MCF 10A (cell line): ENCODE measurements at regions of chr10 and their contacts with region 1.

Region 1: GRCh38 chr10:32207544-32207943 is 139.4 kb downstream of the EPC1 start:
- DNase-seq: peak; percentile 64
- H3K4me3 Mint-ChIP-seq: no peak overlapping the region
- H3K27ac Mint-ChIP-seq: no peak overlapping the region
- H3K4me1 Mint-ChIP-seq: peaks cover 6% of the 10 kb centered on the region
- H3K27me3 Mint-ChIP-seq: no peaks in the 10 kb centered on the region
- CTCF ChIP-seq: peak; percentile 56

Region 2: DNA sequence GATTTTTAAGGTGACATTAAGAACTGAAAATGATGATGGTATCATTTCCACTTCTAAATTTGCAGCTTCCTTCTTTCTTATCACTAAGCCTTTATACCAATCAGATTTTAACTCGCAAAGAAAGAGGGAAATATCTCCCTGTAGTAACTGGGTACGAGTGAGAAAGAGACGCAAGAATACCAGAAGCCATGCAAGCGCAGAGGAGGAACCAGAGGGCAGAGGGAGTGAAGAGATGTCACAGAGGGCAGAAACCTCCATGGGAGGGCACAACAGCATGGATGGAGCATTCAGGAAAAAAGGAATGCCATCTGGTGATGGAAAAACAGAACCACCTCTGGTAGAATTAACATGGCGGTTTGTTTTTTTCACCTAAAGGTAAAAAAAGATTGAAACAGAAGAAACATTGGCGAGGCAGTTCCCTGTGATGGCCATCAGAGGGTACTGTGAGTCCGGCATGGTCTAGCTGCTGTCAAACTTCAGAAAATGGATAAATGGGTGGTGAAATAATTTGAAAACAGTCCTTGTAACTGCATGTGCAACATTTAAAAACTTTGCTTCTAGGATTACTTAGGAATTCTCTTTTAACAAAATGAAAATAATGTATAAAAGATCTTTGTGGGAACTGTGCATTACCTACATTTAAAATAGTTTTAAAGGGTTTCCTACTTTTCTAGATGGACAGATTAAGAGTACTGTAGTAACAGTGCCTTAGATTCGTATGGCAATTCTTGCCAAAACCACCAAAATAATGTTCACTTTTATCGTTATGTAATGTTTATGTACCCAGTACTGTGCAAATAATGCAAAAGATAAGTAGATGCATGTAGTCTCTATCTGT is 370.8 kb before region 1 on chr10:
- CTCF ChIA-PET with region 1: no interaction called
- POLR2A ChIA-PET with region 1: no interaction called
- intact Hi-C with region 1: loop called (anchors 10 kb)
- DNase-seq: peak; percentile 52
- H3K4me3 Mint-ChIP-seq: no peak overlapping the region
- H3K27ac Mint-ChIP-seq: no peak overlapping the region
- H3K4me1 Mint-ChIP-seq: peaks cover 6% of the 10 kb centered on the region
- H3K27me3 Mint-ChIP-seq: no peaks in the 10 kb centered on the region
- CTCF ChIP-seq: peak; percentile 70

Region 3: DNA sequence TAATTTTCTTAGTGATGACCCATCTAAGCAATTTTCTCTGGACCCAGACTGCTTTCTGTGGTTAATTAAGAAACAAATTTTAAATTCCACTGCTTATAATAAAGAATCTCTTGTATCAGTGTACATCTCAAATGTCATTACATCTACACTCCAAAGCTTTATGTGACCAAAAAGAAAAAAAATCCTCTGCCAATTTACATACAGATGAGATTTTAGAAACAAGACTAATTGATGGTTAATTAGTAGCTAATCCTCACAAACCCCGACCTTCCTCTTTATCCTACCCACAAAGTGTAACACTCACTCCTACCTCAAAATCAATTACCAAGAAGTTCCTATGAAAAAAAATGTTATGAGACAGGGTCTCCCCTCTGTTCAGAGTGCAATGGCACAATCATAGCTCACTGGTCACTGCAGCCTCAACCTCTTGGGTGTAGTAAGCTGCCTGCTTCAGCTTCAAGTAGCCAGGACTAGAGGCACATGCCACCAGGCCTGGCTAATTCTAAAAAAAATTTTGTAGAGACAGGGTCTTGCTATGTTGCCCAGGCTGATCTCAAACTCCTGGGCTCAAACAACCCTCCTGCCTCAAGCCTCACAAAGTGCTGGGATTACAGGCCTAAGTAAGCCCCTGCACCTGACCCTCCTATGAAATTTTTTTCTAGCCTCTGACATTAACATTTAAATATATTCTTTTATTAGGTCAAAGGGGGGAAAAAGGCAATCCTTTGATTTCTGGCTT is 166.1 kb before region 1 on chr10:
- CTCF ChIA-PET with region 1: no interaction called
- POLR2A ChIA-PET with region 1: no interaction called
- intact Hi-C with region 1: loop called (anchors 5 kb)
- DNase-seq: no peak
- H3K4me3 Mint-ChIP-seq: no peak overlapping the region
- H3K27ac Mint-ChIP-seq: peak overlapping the region; percentile 10
- H3K4me1 Mint-ChIP-seq: peaks cover 32% of the 10 kb centered on the region
- H3K27me3 Mint-ChIP-seq: no peaks in the 10 kb centered on the region
- CTCF ChIP-seq: no peak